Right cardiac atrium (tissue), 5 donors: ENCODE measurements at regions of chr17 and their contacts with region 1.

Region 1: DNA sequence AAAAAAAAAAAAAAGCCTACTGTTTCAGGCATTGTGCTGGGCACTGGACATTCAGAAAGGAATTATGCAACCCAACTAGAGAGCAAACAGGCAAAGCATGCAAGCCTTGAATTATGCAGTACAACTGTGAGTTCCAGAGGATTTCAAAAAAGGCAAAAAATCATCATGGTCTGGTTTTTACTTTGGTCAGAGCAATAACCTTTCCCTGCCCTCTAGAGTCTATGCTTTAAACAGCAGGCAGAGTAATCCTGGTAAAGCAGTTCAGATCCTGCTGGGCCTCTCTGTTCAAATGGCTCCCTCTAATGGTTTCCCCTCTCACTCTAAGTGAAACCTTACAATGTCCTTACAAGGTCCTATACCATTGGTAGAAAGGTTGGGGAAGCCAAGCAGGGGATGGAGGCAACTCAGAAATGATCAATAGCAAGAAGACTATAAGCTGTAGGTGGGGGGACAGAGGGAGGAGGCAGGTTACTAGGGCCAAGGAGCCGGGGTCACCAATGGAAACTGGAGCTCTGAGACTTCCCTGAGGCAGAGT is 4.6 kb upstream of the TAF15 start:
- DNase-seq: no peak
- ATAC-seq: peak; percentile 59 to 64
- H3K4me3 ChIP-seq: no peak overlapping the region
- H3K27ac ChIP-seq: no peak overlapping the region
- H3K4me1 ChIP-seq: peaks cover 2% of the 10 kb centered on the region
- H3K27me3 ChIP-seq: no peaks in the 10 kb centered on the region

Region 2: DNA sequence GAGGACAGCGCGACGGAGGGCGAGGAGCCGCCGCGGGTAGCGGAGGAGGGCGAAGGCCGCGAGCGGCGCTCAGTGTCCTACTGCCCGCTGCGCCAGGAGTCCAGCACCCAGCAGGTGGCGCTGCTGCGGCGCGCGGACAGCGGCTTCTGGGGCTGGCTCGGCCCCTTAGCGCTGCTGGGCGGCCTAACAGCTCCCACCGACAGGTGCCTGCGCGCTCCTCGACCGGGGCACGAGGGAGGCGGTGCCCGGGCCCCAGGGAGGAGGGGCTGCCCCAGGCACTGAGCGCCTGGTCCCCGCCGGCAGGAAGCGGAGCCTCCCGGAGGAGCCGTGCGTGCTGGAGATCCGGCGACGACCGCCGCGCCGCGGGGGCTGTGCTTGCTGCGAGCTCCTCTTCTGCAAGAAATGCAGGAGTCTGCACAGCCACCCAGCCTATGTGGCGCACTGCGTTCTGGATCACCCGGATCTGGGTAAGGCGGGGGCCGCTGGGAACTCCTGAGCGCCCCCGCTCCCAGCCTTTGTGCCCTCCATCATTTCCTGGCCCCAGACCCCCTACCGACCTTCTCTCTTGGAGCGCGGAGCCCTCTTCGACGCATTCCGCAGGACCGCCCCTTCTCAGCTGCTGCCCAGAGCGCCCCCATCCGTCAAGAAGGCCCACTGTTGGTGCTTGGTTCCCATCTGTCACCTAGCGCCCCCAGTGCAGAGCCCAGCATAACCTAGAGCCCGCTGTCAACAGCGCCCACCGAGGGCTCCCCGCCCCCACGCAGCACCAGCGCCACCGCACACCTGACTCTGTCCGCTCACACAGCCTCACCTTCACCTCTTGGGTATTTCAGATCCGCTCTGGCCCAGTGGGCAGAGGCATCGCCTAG is 40.4 kb before region 1 on chr17:
- intact Hi-C with region 1: loop called (anchors 1 to 5 kb)
- DNase-seq: peak; percentile 88 to 95 (median 95)
- ATAC-seq: peak; percentile 92 to 97
- H3K4me3 ChIP-seq: peak overlapping the region; percentile 36
- H3K27ac ChIP-seq: no peak overlapping the region
- H3K4me1 ChIP-seq: peaks cover 2% of the 10 kb centered on the region
- H3K27me3 ChIP-seq: no peaks in the 10 kb centered on the region

Region 3: GRCh38 chr17:35870906-35871819 is 66.4 kb after region 1 on chr17:
- intact Hi-C with region 1: no loop called
- DNase-seq: no peak
- ATAC-seq: peak; percentile 65 to 84
- H3K4me3 ChIP-seq: no peak overlapping the region
- H3K27ac ChIP-seq: no peak overlapping the region
- H3K4me1 ChIP-seq: peaks cover 2% of the 10 kb centered on the region
- H3K27me3 ChIP-seq: no peaks in the 10 kb centered on the region

Region 4: DNA sequence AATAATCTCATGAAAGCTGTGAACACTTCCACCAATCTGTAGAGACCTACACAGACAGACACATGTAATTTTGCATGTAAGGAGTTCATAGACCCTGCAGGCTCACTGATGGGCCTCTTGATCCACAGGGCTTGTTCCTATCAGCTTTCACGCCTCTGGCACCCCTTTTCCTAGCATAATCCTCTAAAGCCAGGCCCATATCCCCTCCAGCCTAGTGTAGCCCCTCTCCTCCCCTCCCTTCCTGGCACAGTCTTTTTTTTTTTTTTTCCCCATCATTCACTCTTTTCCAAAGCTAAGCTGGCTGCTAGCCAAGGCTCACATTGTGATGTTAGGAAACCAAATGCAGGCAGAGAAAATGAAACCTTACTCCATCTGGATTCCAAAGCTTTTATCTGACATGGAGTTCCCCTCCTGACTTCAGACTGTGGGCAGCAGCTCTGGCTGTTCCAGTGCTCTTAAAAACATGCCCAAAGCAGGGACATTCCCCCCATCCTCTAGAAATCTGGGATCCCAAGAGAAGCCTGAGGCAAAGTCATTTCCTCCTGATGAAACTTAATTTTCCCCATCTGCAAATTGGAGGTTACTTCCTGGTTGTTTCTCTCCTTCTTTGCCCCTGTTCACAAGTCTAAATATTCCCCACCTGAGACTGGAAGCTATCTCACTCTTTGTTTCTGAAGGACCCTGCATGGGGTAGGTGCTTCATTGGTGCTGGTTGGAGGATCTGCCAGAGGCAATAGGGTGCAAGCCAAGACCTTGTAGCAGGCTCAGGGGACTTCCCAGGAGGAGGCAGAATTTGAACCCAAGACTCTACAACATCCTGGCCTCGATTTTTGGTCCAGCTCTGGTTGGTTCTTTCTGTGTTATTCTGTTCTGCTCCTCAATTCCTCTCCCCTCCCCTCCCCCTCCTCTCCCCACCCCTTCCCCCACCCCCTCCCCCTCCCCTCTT is 85.4 kb after region 1 on chr17:
- intact Hi-C with region 1: no loop called
- DNase-seq: peak in 2 of 3 donors; percentile 54 to 73
- ATAC-seq: peak; percentile 45 to 58
- H3K4me3 ChIP-seq: no peak overlapping the region
- H3K27ac ChIP-seq: no peak overlapping the region
- H3K4me1 ChIP-seq: no peaks in the 10 kb centered on the region
- H3K27me3 ChIP-seq: no peaks in the 10 kb centered on the region